ENCODE measurements at regions of chr16 and their contacts with region 1.

Region 1: DNA sequence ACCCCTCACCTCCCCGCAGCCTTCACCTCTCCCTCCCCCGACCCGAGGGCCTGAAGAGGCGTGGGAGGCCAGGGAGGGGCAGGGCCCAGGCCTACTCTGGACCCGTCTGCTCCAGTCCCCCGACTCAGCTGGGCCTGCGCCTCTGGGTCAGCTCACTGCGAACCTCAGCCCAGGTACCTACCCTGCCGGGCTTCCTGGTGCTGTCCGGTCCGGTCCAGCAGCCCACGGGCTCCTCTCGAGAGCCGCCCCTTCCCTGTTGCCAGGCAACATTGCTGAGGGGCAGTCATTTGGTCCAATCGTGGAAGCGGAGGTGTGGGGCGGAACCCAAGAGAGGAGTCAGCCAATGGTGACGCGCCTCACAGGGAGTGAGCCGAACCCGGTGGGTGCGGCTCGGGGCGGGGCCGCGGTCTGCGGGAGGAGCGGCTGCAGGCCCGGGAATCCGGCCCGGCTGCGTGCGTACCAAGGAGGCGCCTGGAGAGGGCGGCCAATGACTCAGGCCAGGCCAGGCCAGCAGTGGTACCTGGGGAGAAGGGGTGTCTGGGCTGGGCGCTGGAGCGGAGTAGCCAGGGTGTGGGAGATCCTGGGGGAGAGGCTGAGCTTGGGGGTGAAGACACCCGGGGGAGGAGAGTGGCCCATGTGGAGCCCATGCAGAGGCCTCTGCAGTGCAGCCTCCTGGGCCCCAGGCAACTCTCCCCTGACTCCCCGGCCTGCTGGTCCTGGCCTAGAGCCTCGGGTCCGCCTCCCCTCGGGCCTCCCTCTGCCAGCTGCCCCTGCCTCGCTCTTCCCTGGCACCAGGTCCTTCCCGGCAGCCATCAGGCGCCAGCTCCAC is at the start of gene MEAK7:
- DNase-seq: peak; percentile 99
- H3K4me3 Mint-ChIP-seq: peak within 1 kb of the TSS; percentile 94
- H3K27ac Mint-ChIP-seq: peak within 1 kb of the TSS; percentile 82
- H3K4me1 Mint-ChIP-seq: peaks cover 41% of the 10 kb centered on the region
- H3K27me3 Mint-ChIP-seq: no peaks in the 10 kb centered on the region
- total RNA-seq, gene MEAK7: 6.3 to 7.0 TPM

Region 2: GRCh38 chr16:84186685-84187437 is 317.8 kb before region 1 on chr16 and contains the start of gene TAF1C:
- CTCF ChIA-PET with region 1: no interaction called
- intact Hi-C with region 1: loop called (anchors 2 kb)
- DNase-seq: peak; percentile 94
- H3K4me3 Mint-ChIP-seq: peak within 1 kb of the TSS; percentile 93
- H3K27ac Mint-ChIP-seq: peak within 1 kb of the TSS; percentile 89
- H3K4me1 Mint-ChIP-seq: peaks cover 21% of the 10 kb centered on the region
- H3K27me3 Mint-ChIP-seq: no peaks in the 10 kb centered on the region
- total RNA-seq, gene TAF1C: 59.3 to 66.2 TPM

Region 3: GRCh38 chr16:84270071-84270470 is 234.6 kb before region 1 on chr16:
- CTCF ChIA-PET with region 1: interaction called, 37 read pairs
- intact Hi-C with region 1: no loop called
- DNase-seq: no peak
- H3K4me3 Mint-ChIP-seq: no peak overlapping the region
- H3K27ac Mint-ChIP-seq: no peak overlapping the region
- H3K4me1 Mint-ChIP-seq: no peaks in the 10 kb centered on the region
- H3K27me3 Mint-ChIP-seq: peaks cover 5% of the 10 kb centered on the region

Region 4: DNA sequence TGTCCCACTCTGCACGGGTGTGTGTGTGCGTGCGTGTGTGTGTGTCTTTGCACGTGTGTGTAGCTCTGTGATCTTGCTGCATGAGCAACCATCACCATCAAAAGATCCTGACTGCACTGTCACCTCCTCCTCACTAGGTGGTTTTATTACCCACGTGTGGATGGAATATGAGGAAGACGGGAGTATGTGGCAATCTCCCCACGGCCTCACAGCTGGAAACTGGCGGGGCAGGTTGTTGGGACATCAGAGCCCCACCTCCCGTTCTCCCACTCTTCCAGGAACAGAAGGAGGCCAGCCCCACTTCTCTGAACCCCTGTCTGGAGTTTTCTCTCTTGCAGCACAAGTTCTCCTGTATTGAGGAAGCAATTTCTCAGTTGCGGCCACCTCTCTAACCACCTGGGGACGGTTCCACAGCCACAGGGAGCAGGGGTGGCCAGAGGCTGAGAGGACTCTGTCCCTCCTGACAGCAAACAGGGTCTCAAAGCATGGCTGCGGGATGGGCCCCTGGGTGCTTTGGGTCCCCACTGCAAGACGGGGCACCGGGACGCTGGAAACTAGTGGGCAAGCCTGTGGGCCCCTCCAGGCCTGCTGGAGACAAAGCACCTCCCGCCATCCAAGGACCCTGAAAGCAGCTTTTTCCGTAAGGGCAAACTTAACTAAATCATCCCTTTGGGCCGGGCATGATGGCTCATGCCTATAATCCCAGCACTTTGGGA is 164.2 kb before region 1 on chr16:
- CTCF ChIA-PET with region 1: no interaction called
- intact Hi-C with region 1: no loop called
- DNase-seq: no peak
- H3K4me3 Mint-ChIP-seq: no peak overlapping the region
- H3K27ac Mint-ChIP-seq: no peak overlapping the region
- H3K4me1 Mint-ChIP-seq: no peaks in the 10 kb centered on the region
- H3K27me3 Mint-ChIP-seq: no peaks in the 10 kb centered on the region

Region 5: GRCh38 chr16:84360170-84360569 is 144.5 kb before region 1 on chr16:
- CTCF ChIA-PET with region 1: interaction called, 3 read pairs
- intact Hi-C with region 1: loop called (anchors 1 kb)
- DNase-seq: peak; percentile 91
- H3K4me3 Mint-ChIP-seq: no peak overlapping the region
- H3K27ac Mint-ChIP-seq: peak overlapping the region; percentile 73
- H3K4me1 Mint-ChIP-seq: peaks cover 29% of the 10 kb centered on the region
- H3K27me3 Mint-ChIP-seq: no peaks in the 10 kb centered on the region

Region 6: DNA sequence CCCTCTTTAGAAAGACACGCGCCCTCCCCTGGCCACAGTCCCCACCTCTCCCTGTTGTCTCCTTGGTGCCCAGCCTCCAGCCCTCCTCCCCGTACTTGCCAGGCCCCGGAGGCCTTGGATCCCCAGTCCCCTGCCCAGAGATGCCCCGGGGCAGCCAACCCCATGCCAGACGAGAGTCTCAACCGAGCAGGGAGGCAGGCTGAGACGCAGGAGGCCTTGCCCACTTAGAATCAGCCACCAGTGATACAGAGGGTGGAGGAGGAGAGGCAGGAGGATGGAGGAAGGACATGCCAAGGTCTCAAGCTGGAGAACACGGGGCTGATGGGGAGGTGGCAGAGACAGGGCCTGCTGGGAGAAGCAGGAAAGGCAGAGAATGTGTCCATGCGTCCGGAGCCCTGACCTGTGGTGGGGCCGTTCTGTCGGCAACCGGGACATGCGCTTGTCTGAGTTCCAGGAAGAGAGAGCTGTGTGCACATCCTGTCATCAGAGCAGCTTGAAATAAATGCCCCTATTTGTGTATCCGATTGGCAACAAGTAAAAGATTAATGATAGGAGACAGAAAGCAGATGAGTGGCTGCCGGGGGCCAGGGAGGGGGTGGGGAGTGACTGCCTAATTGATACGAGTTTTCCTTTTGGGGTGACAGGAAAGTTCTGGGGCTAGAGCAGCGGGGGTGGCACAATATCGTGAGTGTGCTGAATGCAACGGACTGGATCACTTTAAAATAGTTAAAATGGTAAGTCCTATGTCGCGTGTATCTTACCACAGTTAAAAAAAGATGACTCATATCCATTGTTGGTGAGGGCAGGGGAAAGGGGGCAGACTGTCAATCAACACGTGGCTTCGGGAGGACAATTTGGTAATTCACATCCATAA is 44.6 kb after region 1 on chr16:
- CTCF ChIA-PET with region 1: interaction called, 22 read pairs
- intact Hi-C with region 1: no loop called
- DNase-seq: peak; percentile 65
- H3K4me3 Mint-ChIP-seq: peak overlapping the region; percentile 86
- H3K27ac Mint-ChIP-seq: peak overlapping the region; percentile 97
- H3K4me1 Mint-ChIP-seq: peaks cover 62% of the 10 kb centered on the region
- H3K27me3 Mint-ChIP-seq: no peaks in the 10 kb centered on the region

Region 7: DNA sequence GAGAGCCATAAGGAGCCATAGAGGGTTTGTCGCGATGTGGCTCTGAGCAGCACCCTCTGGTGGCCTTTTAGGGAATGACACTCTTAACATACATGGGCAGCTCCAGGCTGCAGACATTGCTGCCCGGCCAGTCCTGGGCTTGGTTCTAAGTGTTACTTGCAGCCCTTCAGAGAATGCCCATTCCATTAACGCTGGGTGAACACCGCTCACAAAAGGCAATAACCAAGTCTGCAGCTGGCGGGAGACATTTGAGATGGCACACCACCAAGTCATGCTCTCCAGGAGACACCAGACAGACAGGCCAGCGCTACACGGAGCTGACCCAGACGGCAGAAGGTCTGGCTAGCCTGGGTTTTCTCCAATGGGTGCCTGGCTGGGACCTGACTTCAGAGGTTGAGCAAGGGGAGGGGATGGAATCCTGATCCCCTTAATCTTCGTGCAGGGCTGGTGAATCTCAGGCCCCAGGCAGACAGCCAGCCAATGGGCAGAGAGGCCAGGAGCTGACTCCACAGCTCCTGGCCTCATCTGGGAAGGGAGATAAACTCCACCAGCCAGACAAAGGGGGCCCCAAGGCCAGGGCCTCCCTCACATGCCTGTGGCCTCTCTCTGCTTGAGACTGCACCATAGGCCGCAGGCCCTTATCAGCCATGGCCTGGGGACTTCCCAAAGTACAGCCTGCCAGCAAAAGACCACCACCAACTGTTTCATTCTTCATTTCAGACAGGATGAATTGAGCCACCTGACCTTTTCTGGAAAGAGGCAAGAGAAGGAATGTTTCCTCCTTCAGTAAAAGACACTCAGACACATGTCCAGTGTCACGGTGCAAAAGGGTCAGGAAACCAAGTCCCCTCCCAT is 447.9 kb after region 1 on chr16:
- CTCF ChIA-PET with region 1: no interaction called
- intact Hi-C with region 1: loop called (anchors 5 kb)
- DNase-seq: peak; percentile 83
- H3K4me3 Mint-ChIP-seq: no peak overlapping the region
- H3K27ac Mint-ChIP-seq: no peak overlapping the region
- H3K4me1 Mint-ChIP-seq: no peaks in the 10 kb centered on the region
- H3K27me3 Mint-ChIP-seq: no peaks in the 10 kb centered on the region

Region 8: GRCh38 chr16:85027349-85027957 is 522.8 kb after region 1 on chr16 and contains the start of gene KIAA0513:
- CTCF ChIA-PET with region 1: no interaction called
- intact Hi-C with region 1: loop called (anchors 2 kb)
- DNase-seq: peak; percentile 95
- H3K4me3 Mint-ChIP-seq: peak within 1 kb of the TSS; percentile 87
- H3K27ac Mint-ChIP-seq: peak within 1 kb of the TSS; percentile 95
- H3K4me1 Mint-ChIP-seq: peaks cover 33% of the 10 kb centered on the region
- H3K27me3 Mint-ChIP-seq: no peaks in the 10 kb centered on the region
- total RNA-seq, gene KIAA0513: 9.7 to 9.8 TPM

Measured in activated naive CD4-positive, alpha-beta T cell treated with anti-CD3 and anti-CD28 coated beads for 36 hours (primary cell).